AG04450 (cell line): ENCODE measurements at regions of chr5 and their contacts with region 1.

Region 1: GRCh38 chr5:88729084-88729828 is 153.7 kb downstream of the MEF2C start:
- DNase-seq: peak; percentile 59
- H3K4me3 ChIP-seq: no peak overlapping the region
- H3K27ac ChIP-seq: no peak overlapping the region
- H3K27me3 ChIP-seq: no peaks in the 10 kb centered on the region
- CTCF ChIP-seq: peak; percentile 73

Region 2: GRCh38 chr5:88690409-88691229 is 38.6 kb before region 1 on chr5:
- CTCF ChIA-PET with region 1: interaction called, 21 read pairs
- POLR2A ChIA-PET with region 1: no interaction called
- DNase-seq: peak; percentile 18
- H3K4me3 ChIP-seq: peak overlapping the region; percentile 22; the same call in 1 of the 2 replicates
- H3K27ac ChIP-seq: no peak overlapping the region
- H3K27me3 ChIP-seq: peaks cover 100% of the 10 kb centered on the region
- CTCF ChIP-seq: peak; percentile 99

Region 3: DNA sequence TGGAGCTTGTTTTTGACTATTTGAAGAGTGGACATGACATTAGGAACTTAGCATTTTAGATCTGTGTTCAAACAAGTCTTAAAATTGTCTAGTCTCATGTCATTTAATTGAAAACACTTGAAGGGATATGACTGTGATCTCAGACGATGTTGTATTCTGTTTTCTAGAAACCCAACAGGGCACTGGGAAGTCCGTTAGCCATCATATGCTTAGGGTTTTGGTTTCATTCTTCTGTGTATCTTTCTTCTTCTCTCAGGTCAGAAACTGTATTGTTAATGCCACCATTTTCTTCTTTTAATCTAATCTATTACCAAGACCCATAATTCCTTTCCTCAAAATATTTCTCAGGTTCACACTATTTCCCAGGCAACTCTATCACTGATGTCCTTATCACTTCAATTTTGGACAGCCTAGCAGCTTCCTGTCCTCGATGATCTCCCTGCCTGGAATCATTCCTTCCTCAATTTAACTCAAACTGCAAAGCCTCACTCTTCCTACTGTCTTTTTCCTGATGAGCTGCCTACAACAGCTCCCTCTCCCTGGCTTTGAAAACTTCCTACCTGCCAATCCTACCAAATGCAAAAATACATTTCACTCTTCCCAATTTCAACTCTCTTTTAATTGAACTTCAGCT is 76.0 kb after region 1 on chr5:
- CTCF ChIA-PET with region 1: interaction called, 12 read pairs
- POLR2A ChIA-PET with region 1: no interaction called
- DNase-seq: no peak
- H3K4me3 ChIP-seq: no peak overlapping the region
- H3K27ac ChIP-seq: no peak overlapping the region
- H3K27me3 ChIP-seq: no peaks in the 10 kb centered on the region
- CTCF ChIP-seq: no peak

Region 4: GRCh38 chr5:88847420-88847819 is 118.2 kb after region 1 on chr5:
- CTCF ChIA-PET with region 1: interaction called, 10 read pairs
- POLR2A ChIA-PET with region 1: no interaction called
- DNase-seq: no peak
- H3K4me3 ChIP-seq: no peak overlapping the region
- H3K27ac ChIP-seq: no peak overlapping the region
- H3K27me3 ChIP-seq: no peaks in the 10 kb centered on the region
- CTCF ChIP-seq: no peak

Region 5: DNA sequence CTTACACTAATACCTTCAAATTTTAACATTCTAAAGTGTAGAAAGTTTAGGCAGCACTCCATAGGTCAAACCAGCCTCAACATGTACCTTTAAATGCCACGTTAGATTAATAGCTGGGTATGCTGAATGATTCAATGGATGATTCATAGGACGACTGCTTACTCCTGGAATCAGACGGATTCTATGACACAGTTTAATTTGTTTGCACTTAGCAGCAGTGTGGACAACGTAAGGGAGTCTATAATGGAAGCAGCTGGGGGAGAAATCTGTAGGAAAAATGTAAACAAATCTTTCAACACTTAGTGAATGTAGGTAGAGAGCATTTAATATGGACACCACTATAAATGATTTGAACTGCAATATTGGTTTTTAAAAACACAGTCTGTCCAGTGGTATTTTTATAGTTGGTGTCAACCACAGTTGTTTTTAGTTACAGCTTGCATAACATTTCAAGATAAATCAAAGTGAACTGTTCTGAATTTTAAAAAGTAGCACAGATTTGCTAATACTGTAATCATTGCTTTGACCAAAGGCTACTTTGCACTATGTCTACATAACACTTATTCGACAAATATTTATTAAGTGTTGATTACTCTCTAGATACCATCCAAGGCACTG is 855.2 kb after region 1 on chr5:
- CTCF ChIA-PET with region 1: interaction called, 10 read pairs
- POLR2A ChIA-PET with region 1: no interaction called
- DNase-seq: peak; percentile 37
- H3K4me3 ChIP-seq: no peak overlapping the region
- H3K27ac ChIP-seq: no peak overlapping the region
- H3K27me3 ChIP-seq: no peaks in the 10 kb centered on the region
- CTCF ChIP-seq: no peak

Region 6: DNA sequence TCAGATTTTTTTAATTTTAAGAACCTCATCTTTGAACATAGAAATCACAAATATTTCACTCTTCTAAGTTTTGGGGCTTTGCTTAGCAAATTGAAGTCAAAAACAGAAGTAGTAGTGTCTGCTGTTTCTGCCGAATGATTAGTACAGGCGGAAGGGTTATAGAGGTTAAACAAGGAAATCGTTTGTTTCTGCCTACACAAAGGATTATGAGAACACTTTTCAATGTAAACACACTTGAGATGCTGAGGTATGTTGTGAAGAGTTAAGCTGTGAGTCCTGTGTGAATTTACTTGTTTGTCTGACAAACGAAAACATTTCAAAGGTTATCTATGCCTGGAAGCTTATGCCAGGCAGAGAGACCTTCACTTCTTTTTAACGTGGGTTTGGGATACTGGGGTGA is 1455.5 kb after region 1 on chr5:
- CTCF ChIA-PET with region 1: interaction called, 14 read pairs
- POLR2A ChIA-PET with region 1: no interaction called
- DNase-seq: no peak
- H3K4me3 ChIP-seq: no peak overlapping the region
- H3K27ac ChIP-seq: no peak overlapping the region
- H3K27me3 ChIP-seq: no peaks in the 10 kb centered on the region
- CTCF ChIP-seq: no peak